ENCODE measurements at regions of chr4 and their contacts with region 1.

Region 1: DNA sequence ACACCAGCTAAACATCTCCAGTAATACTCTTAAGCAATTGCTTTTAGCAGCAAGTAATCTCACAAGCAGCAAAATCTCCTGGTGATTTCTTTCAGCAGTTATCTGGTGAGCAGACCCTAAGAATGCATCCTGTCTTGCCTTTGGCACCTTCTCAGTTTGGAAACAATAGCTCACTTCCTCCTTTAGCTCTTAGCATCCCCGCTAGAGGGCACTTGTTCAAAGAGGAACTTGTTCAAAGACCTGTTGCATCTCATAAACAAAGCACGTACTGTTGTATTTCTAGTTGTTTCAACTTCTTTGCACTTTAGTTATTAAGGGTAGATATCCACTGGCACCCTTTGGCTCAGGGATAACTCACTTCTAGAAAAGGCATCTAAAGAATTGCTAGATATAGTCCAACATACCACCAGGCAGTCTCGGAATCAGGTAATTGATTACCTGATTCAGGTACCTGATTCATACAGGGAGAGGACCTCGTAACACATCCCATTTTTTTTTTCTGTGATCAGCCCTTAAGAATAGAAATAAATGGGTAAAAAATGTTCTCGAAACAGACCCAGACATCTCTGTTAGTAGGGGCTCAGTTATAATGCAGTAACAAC is 81.9 kb upstream of the QRFPR start:
- DNase-seq: peak in 2 of 10 donors; percentile 22 to 39

Region 2: GRCh38 chr4:121656269-121656641 is 193.5 kb after region 1 on chr4:
- intact Hi-C with region 1: loop called (anchors 1 kb)
- DNase-seq: peak in 6 of 10 donors; percentile 31 to 74 (median 38)

Region 3: DNA sequence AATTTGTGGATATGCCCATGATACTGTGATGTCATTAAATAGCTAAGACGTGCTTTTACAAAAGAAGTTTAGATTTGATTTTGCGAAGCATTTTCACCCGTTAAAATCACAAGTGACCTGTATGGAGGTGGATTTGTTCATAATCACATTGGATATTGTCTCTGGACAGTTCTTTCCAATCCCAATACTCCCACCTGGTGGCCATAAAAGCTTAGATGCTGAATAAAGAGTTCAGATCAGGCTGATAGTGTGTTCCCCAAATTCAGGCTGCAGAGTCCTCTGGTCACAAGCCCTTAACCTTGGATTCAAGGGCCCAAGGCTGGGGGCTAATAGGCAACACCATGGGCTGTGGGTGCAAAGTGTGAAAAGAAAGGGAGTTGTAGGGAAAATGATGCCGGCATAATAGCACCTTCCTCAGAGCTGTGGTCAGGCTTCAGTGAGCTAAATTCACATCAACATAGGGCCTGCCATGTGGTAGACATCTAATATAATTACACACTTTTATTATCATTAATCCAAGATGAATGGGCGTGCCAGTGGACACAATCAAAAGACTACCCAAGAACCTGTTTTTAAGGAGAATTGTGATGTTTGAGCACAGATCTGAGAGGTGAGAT is 274.1 kb after region 1 on chr4:
- intact Hi-C with region 1: loop called (anchors 5 kb)
- DNase-seq: no peak